Astrocyte of the cerebellum (primary cell): ENCODE measurements at regions of chr5 and their contacts with region 1.

Region 1: GRCh38 chr5:9456435-9457042 is 89.3 kb downstream of the SEMA5A start:
- DNase-seq: peak; percentile 89
- H3K4me3 ChIP-seq: no peak overlapping the region
- CTCF ChIP-seq: no peak

Region 2: GRCh38 chr5:9498541-9499497 is 42.3 kb after region 1 on chr5:
- in situ Hi-C with region 1: loop called (anchors 5 kb)
- DNase-seq: no peak
- H3K4me3 ChIP-seq: no peak overlapping the region
- CTCF ChIP-seq: peak; percentile 62